Mammary epithelial cell (primary cell): ENCODE measurements at regions of chr22 and their contacts with region 1.

Region 1: GRCh38 chr22:45769569-45770210 is 98.1 kb downstream of the ATXN10 start:
- DNase-seq: no peak
- H3K4me3 ChIP-seq: no peak overlapping the region
- H3K27ac ChIP-seq: no peak overlapping the region
- H3K4me1 ChIP-seq: no peaks in the 10 kb centered on the region
- H3K27me3 ChIP-seq: no peaks in the 10 kb centered on the region
- CTCF ChIP-seq: no peak

Region 2: DNA sequence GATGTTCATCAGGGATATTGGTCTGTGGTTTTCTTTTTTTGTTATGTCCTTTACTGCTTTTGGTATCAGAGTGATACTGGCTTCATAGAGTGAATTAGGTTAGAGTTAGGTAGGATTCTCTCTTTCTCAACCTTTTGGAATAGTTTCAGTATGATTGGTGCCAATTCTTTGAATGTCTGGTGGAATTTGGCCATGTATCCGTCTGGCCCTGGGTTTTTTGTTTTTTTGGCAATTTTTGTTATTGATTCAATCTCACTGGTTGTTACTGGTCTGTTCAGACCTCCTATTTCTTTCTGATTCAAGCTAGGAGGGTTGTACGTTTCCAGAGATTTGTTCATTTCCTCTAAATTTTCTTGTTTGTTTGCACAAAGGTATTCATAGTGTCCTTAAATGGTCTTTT is 43.6 kb before region 1 on chr22:
- CTCF ChIA-PET with region 1: no interaction called
- dilution Hi-C with region 1: loop called (anchors 5 kb)
- in situ Hi-C with region 1: no loop called
- intact Hi-C with region 1: no loop called
- DNase-seq: no peak
- H3K4me3 ChIP-seq: no peak overlapping the region
- H3K27ac ChIP-seq: no peak overlapping the region
- H3K4me1 ChIP-seq: peaks cover under 1% of the 10 kb centered on the region
- H3K27me3 ChIP-seq: no peaks in the 10 kb centered on the region
- CTCF ChIP-seq: no peak